ENCODE measurements at regions of chr1 and their contacts with region 1.

Region 1: GRCh38 chr1:234656856-234657654 is 47.1 kb upstream of the IRF2BP2 start:
- DNase-seq: peak; percentile 51
- CTCF ChIP-seq: no peak

Region 2: DNA sequence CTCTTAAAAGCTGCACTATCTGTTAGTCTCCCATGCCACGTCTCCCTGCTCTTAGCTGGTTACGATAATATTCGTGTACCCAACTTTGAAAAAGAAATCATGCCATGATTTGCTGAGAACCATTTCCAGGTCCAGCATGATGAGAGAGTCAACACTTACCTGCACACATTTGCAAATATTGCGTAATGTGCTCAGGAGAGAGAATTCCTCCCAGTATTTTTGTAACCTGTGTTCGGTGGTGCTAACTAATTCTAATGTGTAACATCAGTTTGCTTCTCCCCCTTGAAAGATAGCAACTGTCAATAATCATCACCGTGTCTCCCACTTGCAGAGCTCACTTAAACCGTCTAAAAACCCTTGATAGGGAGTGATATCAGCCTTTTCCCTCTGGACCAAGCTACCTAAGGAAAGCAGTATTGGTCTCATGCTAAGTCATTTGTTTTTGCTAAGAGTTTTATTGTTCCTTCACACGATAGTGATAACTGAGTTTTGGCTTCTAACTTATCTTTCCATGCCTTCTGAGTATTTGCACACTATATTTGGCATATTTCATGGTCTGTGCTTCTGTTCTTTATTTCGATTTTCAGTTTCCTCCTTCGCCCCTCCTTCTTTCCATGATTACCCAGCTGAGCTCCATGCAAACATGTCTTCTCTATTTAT is 14.0 kb after region 1 on chr1:
- CTCF ChIA-PET with region 1: interaction called, 18 read pairs
- POLR2A ChIA-PET with region 1: no interaction called
- DNase-seq: no peak
- CTCF ChIP-seq: no peak